ENCODE measurements at regions of chr5 and their contacts with region 1.

Region 1: GRCh38 chr5:149317281-149318048 is 27.8 kb upstream of the GRPEL2 start:
- DNase-seq: peak in 1 of 2 donors; percentile 43
- H3K4me3 ChIP-seq: no peak overlapping the region
- CTCF ChIP-seq: no peak
- POLR2A ChIP-seq: no peak

Region 2: DNA sequence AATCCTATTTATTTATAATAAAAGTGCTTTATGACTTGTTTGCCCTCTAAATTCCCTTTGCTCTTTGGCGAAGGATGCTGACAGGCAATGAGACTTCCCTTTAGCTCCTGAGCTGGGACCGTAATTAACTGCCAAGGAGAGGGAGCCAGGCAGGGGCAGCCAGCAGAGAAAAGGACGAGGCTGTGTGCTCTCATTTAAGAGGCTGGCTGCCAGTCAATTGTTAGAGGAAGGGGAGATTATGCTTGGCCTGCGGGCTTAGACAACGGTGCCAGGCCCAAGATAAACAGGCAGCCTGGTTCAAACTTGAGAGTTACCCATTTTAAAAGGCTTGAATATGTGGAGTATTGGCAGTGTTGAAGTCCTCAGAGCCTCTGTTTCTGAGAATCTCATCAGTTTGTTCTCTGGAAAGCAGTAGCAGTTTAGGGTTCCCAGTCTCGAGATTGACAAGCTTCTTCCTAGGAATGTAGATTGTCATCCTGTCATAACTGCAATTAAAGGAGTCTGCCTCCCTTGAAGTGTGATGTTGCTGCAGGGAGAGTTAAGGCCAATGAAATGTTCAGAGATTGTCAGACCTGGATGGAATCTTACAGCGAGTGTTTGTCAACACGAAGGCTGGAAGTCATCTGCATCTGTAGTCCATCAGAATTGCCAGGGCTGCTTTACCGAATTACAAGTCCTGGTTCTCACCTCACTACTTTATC is 1648.1 kb before region 1 on chr5:
- intact Hi-C with region 1: no loop called
- DNase-seq: no peak
- H3K4me3 ChIP-seq: no peak overlapping the region
- CTCF ChIP-seq: no peak
- POLR2A ChIP-seq: no peak

Region 3: DNA sequence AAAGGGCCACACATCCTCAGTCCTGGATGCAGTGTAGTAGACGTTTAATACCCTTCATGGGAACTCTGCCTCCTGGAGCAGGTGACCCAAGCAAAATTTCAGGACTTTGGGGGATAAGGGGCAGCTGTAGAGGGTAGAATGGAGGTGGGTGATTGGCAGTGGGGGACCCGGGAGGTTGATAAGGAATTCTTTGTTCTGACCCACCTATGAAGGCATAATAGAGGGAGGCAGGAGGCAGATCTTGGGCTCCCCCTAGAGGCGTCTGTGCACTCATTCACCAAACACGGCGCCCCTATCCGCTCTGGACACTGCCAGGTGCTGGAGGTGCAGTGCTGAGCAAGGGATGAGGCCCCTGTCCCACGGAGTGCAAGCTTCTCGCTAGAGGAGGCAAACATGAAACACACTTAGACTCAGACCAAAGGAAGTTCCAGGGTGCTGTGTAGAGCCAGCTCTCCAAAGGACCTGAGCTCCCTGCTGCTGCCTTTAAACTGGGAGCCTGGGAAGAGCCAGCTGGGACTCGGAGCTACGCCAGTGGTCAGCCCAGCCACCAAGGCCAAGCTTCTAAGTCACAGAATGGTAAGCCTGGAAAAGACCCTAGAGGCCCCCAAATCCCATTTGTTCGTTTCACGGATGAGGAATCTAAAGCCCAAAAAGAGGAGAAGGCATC is 54.0 kb after region 1 on chr5:
- intact Hi-C with region 1: loop called (anchors 5 kb)
- DNase-seq: peak in 1 of 2 donors; percentile 90
- H3K4me3 ChIP-seq: no peak overlapping the region
- CTCF ChIP-seq: no peak
- POLR2A ChIP-seq: no peak